Endothelial cell of umbilical vein (primary cell): ENCODE measurements at regions of chr2 and their contacts with region 1.

Region 1: DNA sequence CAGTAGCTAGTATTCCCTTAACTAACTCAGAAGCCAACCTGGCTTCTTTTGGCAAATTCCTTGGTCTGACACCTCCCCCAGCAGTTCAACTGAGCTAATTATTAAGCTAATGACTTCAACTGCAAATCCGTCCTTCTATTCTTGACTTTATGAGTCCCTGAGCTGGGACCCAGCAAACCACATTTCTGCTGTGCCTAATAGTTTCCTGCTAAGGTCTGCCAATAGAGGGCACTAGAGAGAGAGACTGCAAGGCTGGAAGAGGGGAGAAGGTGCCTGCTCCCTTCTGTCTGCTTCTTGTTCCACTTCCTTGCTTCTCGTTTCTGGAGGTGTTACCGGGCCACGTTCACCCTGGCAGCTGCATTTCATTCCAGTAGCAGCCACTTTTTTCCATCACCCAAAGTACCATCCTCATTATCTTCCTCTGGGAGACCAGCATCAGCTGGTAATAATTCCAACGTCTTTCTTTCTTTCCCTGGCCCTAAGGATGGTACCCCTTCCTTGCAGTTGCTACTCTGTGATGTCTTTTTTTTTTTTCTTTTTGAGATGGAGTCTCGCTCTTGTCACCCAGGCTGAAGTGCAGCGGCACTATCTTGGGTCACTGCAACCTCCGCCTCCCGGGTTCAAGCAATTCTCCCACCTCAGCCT is 352.0 kb downstream of the TNS1 start:
- DNase-seq: peak; percentile 51
- H3K4me3 ChIP-seq: no peak overlapping the region
- H3K27ac ChIP-seq: no peak overlapping the region
- H3K4me1 ChIP-seq: no peaks in the 10 kb centered on the region
- H3K27me3 ChIP-seq: no peaks in the 10 kb centered on the region
- CTCF ChIP-seq: peak; percentile 68 to 77
- POLR2A ChIP-seq: no peak

Region 2: DNA sequence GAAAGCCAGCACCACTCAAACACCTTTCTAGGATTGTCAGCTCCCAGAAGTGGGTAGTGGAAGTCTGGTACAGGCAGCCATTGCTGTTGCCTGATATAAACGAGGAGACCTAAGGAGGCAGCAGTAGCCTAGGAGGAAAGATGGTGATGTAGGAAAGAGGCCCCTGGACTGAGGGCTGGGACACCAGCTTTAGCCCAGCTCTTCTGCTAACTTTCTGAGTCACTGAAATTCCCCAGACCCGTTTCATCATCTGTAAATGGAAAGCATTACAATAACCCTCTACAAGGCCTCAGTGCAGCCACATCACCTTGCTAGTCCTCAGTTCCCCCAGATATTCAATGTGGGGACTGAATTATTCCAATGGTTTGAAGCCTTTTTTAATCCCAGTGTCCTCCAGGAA is 15.5 kb after region 1 on chr2:
- CTCF ChIA-PET with region 1: interaction called, 14 read pairs
- POLR2A ChIA-PET with region 1: no interaction called
- dilution Hi-C with region 1: no loop called
- intact Hi-C with region 1: no loop called
- DNase-seq: no peak
- H3K4me3 ChIP-seq: no peak overlapping the region
- H3K27ac ChIP-seq: no peak overlapping the region
- H3K4me1 ChIP-seq: no peaks in the 10 kb centered on the region
- H3K27me3 ChIP-seq: no peaks in the 10 kb centered on the region
- CTCF ChIP-seq: no peak
- POLR2A ChIP-seq: no peak

Region 3: GRCh38 chr2:217672491-217672900 is 21.7 kb after region 1 on chr2:
- CTCF ChIA-PET with region 1: interaction called, 14 read pairs
- POLR2A ChIA-PET with region 1: no interaction called
- dilution Hi-C with region 1: no loop called
- intact Hi-C with region 1: no loop called
- DNase-seq: no peak
- H3K4me3 ChIP-seq: no peak overlapping the region
- H3K27ac ChIP-seq: no peak overlapping the region
- H3K4me1 ChIP-seq: no peaks in the 10 kb centered on the region
- H3K27me3 ChIP-seq: no peaks in the 10 kb centered on the region
- CTCF ChIP-seq: no peak
- POLR2A ChIP-seq: no peak

Region 4: GRCh38 chr2:217756375-217757107 is 105.7 kb after region 1 on chr2:
- CTCF ChIA-PET with region 1: interaction called, 31 read pairs
- POLR2A ChIA-PET with region 1: no interaction called
- dilution Hi-C with region 1: no loop called
- intact Hi-C with region 1: loop called (anchors 2 kb)
- DNase-seq: peak; percentile 42
- H3K4me3 ChIP-seq: no peak overlapping the region
- H3K27ac ChIP-seq: no peak overlapping the region
- H3K4me1 ChIP-seq: no peaks in the 10 kb centered on the region
- H3K27me3 ChIP-seq: peaks cover 3 to 4% of the 10 kb centered on the region in 2 experiments
- CTCF ChIP-seq: peak; percentile 89 to 93
- POLR2A ChIP-seq: no peak